ENCODE measurements at regions of chr5 and their contacts with region 1.

Region 1: DNA sequence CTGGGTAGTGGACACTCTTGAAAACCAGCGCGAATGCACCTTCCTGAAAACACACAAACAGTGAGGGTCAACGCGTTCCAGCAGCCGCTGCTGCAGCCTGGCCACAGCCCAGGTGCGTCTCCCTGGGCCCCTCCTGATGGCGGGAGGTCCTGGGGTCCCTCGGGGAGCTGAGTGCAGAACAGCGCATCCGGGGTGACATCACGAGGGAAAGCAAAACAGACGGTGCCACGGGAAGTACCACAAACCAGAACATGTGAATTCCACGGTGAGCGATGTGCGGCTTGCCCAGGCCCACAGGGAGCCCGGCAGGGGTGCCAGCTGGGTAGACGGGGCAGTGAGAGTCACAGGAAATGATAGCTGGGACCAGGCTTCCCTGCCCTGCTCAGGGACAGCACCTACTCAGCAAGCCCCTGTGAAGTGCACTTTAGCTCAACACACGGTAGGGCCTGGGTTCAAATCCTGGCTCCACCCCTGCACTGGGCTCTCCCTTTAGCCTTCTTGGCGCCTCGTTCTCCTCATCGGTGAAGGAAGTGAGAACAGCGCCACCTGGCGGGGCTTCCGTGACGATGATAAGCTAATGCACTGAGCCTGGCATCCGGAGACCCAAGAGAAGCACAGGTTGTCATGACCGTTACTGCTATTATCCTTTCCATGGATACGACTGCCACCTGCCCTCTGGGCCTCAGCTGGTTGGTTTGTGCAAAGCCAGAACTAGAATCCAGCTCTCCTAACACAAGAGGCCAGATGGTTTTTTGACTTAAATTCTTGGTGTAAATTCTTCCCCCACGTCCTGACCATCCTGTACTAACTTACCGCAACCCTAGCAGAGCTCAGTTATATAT is 24.6 kb downstream of the GFPT2 start:
- DNase-seq: peak; percentile 88
- H3K4me3 Mint-ChIP-seq: no peak overlapping the region
- H3K27ac Mint-ChIP-seq: no peak overlapping the region
- H3K4me1 Mint-ChIP-seq: no peaks in the 10 kb centered on the region
- H3K27me3 Mint-ChIP-seq: peaks cover 7% of the 10 kb centered on the region

Region 2: GRCh38 chr5:180315762-180316212 is 12.7 kb before region 1 on chr5:
- CTCF ChIA-PET with region 1: interaction called, 10 read pairs
- POLR2A ChIA-PET with region 1: no interaction called
- DNase-seq: peak; percentile 74
- H3K4me3 Mint-ChIP-seq: no peak overlapping the region
- H3K27ac Mint-ChIP-seq: no peak overlapping the region
- H3K4me1 Mint-ChIP-seq: peaks cover 3% of the 10 kb centered on the region
- H3K27me3 Mint-ChIP-seq: no peaks in the 10 kb centered on the region

Region 3: DNA sequence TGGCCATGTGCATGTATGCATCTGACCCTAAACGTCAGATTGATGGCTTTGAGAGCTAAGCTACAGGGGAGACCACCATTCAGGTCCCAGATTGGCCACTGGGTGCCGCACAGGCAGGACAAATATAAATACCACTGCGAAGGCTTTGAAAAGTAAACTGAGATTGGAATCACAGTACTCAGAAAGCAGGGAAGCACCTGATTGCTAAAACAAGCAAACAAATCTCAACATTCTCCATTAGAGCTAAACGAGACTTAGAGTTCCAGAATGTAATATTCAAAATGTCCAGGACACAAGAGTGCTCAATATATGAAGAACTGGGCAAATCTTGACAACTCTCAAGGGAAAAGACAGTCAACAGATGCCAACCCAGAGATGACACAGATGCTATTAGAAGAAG is 85.7 kb after region 1 on chr5:
- CTCF ChIA-PET with region 1: no interaction called
- POLR2A ChIA-PET with region 1: no interaction called
- DNase-seq: no peak
- H3K4me3 Mint-ChIP-seq: no peak overlapping the region
- H3K27ac Mint-ChIP-seq: no peak overlapping the region
- H3K4me1 Mint-ChIP-seq: no peaks in the 10 kb centered on the region
- H3K27me3 Mint-ChIP-seq: peaks cover 2% of the 10 kb centered on the region